Activated CD4-positive, alpha-beta memory T cell treated with anti-CD3 and anti-CD28 coated beads, Interleukin-2, amount 10 ng/mL, durations not matched to agents 7 days and 5 days (primary cell): ENCODE measurements at regions of chr2 and their contacts with region 1.

Region 1: DNA sequence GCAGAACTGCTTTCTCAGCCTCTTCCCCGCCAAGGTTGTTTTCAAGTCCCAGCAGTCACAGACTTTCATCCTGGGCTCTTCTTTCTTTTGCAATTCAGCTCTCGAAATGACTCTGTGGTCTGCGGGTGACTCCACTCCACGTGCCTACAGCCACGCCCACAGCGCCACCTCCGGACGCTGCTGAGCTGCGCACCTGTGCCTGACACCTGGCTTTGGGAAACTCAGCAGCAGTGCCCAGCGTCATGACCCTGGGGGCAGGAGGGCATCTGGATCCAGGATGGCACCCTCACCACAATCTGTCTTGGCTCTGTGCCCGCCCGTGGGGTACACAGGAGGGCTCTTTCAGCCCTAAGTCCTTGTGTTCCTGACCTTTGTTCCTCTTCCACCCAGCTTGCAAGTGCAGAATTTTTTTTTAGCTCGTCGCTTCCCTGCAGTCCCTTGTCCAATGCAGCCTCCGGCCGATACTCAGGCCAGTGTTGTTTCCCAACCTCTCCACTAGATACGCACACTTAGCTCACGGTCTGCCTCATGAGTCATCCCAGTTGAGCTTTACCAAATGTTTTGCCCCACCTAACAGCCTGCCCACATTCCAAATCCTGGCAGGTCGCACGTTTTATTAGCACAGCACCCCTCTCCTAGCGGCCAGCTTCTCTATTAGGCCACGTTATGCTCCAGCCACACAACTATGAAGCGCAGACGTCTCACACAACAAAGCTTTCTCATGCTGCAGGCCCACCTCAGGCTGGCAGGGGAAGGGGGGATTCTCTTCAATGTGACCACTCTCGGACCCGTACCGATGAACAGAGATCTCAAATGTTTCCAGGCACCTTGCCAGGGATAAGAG is 6.5 kb upstream of the CAPN10 start:
- DNase-seq: peak; percentile 88
- H3K4me3 Mint-ChIP-seq: no peak overlapping the region
- H3K27ac Mint-ChIP-seq: peak overlapping the region; percentile 79
- H3K4me1 Mint-ChIP-seq: peaks cover 51% of the 10 kb centered on the region
- H3K27me3 Mint-ChIP-seq: no peaks in the 10 kb centered on the region

Region 2: GRCh38 chr2:240560480-240561326 is 19.3 kb before region 1 on chr2:
- CTCF ChIA-PET with region 1: interaction called, 98 read pairs
- POLR2A ChIA-PET with region 1: interaction called, 127 read pairs
- DNase-seq: peak; percentile 100
- H3K4me3 Mint-ChIP-seq: peak overlapping the region; percentile 92
- H3K27ac Mint-ChIP-seq: peak overlapping the region; percentile 87
- H3K4me1 Mint-ChIP-seq: peaks cover 75% of the 10 kb centered on the region
- H3K27me3 Mint-ChIP-seq: no peaks in the 10 kb centered on the region

Region 3: DNA sequence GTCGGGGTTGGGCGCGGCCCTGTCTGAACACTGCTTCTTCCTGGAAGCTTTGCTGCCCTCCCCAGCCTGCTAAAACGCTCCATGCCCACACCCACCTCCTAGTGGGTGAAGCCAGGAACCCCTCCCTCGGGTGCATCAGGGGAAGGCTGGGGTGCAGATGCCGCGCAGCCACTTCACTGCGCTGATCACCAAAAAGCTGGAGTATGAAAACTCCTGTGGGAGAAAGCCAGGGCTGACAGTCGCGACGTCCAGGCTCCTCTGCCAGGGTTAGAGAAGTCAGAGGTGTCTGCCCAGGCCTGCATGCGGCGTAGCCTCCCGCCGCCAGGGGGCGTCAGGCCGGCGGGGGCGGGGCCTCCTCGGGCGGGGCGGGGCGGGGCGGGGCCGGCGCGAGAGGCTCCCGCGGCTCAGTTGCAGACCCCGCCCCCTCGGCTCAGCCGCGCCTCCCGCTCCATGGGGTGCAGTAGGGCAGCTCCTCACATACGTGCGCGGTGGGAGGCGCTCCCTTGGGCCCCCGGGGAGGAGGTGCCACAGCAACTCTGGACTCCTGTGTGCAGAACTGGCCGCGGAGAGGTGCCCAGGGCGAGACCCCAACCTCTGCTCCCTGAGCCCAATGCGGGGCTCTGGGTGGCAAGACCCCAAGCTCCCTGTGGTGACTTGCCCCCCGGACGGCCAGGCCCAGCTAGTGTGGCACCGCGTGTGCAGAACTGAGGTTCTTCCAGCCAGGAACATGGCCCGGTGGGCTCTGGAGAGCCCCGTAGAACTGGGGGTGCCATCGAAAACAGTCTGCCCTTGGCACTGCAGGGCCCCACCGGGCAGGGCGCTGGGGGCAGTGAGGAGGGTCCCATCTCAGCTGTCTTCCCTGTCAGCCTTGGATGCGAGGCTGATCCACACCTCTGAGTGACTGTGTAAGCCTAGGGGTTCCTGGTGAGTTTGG is 13.5 kb before region 1 on chr2:
- CTCF ChIA-PET with region 1: interaction called, 98 read pairs
- POLR2A ChIA-PET with region 1: interaction called, 127 read pairs
- DNase-seq: peak; percentile 97
- H3K4me3 Mint-ChIP-seq: peak overlapping the region; percentile 94
- H3K27ac Mint-ChIP-seq: peak overlapping the region; percentile 97
- H3K4me1 Mint-ChIP-seq: peaks cover 71% of the 10 kb centered on the region
- H3K27me3 Mint-ChIP-seq: no peaks in the 10 kb centered on the region

Region 4: GRCh38 chr2:240604291-240604938 is 24.4 kb after region 1 on chr2:
- CTCF ChIA-PET with region 1: no interaction called
- POLR2A ChIA-PET with region 1: no interaction called
- DNase-seq: no peak
- H3K4me3 Mint-ChIP-seq: no peak overlapping the region
- H3K27ac Mint-ChIP-seq: no peak overlapping the region
- H3K4me1 Mint-ChIP-seq: peaks cover 3% of the 10 kb centered on the region
- H3K27me3 Mint-ChIP-seq: no peaks in the 10 kb centered on the region